ENCODE measurements at regions of chr2 and their contacts with region 1.

Region 1: DNA sequence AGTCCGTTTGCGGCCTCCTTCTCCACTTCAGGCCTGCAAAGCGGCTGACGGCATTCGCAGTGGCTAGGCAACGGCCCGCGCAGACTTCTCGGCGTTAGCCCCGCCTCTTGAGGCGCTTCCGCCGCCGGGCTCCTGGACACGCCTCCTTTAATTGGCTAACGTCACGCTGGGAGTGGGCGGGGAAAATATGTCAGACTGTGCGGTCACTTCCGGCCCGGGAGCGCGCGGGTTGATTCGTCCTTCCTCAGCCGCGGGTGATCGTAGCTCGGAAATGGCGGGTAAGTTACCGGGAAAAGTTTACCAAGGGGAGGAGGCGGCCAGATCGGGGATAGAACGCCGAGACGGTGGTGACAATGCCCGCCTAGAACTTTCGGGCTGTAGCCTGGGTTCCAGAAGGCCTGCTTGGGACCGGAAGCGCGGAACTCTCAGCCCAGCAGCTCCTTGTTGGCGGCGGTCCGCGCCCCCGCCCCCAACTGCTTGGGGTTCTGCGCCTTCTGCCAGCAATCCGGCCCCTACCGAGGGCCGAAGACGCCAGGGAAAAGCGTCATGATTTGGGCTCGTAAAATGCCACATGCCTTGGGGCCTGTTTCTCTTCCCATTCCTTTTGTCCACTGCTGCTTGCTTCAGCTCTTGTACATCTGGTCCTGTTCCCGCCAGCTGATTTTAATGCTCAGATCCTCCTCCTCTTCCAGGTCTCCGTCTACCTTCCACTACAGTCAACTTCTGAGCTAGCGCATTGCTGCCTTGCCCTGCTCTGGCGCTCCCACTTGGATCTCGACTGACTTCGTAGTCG is at the start of gene HAT1:
- DNase-seq: peak; percentile 84 to 98
- H3K4me3 ChIP-seq: peak within 1 kb of the TSS; percentile 87 to 97
- H3K27ac ChIP-seq: peak within 1 kb of the TSS; percentile 90 to 94
- H3K4me1 ChIP-seq: peaks cover 8 to 16% of the 10 kb centered on the region in 2 donors
- H3K27me3 ChIP-seq: no peaks in the 10 kb centered on the region
- CTCF ChIP-seq: no peak
- total RNA-seq, gene HAT1: 28.3 TPM

Region 2: DNA sequence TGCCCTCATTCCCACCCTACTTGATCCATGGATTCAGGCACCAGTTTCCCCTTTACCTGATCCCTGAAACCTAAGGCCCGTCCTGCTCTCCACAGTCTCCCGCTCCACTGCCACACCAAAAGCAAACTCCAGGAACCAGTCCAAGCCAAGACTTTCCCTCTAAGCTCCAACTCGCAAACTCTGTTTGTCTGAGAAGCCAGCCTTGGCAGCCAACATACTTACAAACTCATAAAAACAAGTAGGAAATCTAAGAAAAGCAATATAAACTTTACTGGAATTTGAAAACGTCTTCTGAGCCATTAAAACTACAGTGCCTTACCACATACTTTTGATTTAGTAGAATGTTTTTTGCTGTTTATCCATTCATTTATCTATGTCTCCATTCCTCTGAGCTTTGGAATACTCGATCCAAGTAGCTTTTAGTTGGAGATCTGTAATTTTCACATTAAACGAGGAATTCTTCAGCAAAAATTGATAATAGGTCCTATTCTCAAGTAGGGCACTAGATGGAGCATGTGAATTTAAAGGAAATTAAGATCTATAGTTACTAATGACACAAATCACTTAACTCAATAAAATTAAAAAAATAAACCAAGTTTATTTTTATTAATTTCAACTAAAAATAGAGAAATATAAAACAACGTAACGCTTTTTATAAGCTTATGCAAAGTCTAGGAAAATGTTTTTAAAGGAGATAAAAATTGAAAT is 1544.8 kb before region 1 on chr2:
- intact Hi-C with region 1: no loop called
- DNase-seq: no peak
- H3K4me3 ChIP-seq: peak overlapping the region in 1 of 2 donors; percentile 3
- H3K27ac ChIP-seq: peak overlapping the region in 1 of 2 donors; percentile 30
- H3K4me1 ChIP-seq: peaks cover 0 to 5% of the 10 kb centered on the region in 2 donors
- H3K27me3 ChIP-seq: no peaks in the 10 kb centered on the region
- CTCF ChIP-seq: peak in 1 of 3 experiments; percentile 5

Region 3: GRCh38 chr2:171160119-171160955 is 762.1 kb before region 1 on chr2 and contains the start of gene TLK1:
- intact Hi-C with region 1: loop called (anchors 2 kb)
- DNase-seq: peak; percentile 17 to 85
- H3K4me3 ChIP-seq: peak within 1 kb of the TSS; percentile 96 to 97
- H3K27ac ChIP-seq: peak within 1 kb of the TSS; percentile 98 to 99
- H3K4me1 ChIP-seq: peaks cover 0 to 7% of the 10 kb centered on the region in 2 donors
- H3K27me3 ChIP-seq: no peaks in the 10 kb centered on the region
- CTCF ChIP-seq: no peak
- total RNA-seq, gene TLK1: 32.2 TPM

Region 4: GRCh38 chr2:171529914-171530313 is 392.5 kb before region 1 on chr2:
- intact Hi-C with region 1: loop called (anchors 5 kb)
- DNase-seq: no peak
- H3K4me3 ChIP-seq: no peak overlapping the region
- H3K27ac ChIP-seq: peak overlapping the region; percentile 75 to 77
- H3K4me1 ChIP-seq: peaks cover 4 to 35% of the 10 kb centered on the region in 2 donors
- H3K27me3 ChIP-seq: no peaks in the 10 kb centered on the region
- CTCF ChIP-seq: peak in 2 of 3 experiments; percentile 33 to 44

Region 5: GRCh38 chr2:171687287-171688128 is 234.9 kb before region 1 on chr2 and contains the start of gene DYNC1I2:
- intact Hi-C with region 1: loop called (anchors 2 kb)
- DNase-seq: peak; percentile 70 to 96
- H3K4me3 ChIP-seq: peak within 1 kb of the TSS; percentile 76 to 85
- H3K27ac ChIP-seq: peak within 1 kb of the TSS; percentile 84 to 92
- H3K4me1 ChIP-seq: peaks cover 0 to 9% of the 10 kb centered on the region in 2 donors
- H3K27me3 ChIP-seq: no peaks in the 10 kb centered on the region
- CTCF ChIP-seq: no peak
- total RNA-seq, gene DYNC1I2: 81.0 TPM

Region 6: DNA sequence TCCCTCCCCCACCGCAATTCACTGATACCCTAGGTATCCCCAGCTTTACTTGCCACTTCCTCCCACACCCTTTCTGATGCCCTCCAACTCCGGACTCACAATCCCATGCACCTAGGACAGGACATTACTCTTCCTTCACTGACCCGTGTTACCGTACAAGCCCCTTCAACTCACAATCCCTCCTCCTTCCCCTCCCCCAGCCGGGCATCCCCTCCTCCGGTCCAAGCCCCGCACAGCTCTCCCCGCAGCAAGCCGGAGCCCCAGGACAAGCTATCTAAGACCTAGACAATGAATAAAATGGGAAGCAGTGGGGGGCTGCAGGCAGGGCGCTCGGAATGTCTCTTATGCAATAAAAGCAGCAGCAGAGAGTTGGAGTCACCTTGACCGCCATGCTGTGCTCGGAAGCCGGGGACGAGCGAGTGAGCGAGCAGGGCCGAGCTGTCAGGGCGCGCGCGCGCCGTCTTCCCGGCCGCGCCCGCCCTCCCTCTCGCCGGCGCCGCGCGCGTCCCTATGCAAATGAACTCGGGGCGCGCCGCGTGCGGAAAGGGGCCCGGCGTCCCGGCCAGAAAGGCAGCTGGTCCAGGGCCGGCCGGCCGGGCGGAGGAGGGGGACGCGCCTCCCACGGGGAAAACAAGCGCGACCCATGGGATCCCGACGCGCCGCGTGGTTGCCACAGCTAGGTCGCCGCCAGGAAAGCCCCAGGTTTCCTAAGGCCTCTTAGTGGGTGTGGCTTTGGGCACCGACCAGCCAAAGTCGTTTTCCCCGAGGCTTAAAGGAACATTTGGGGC is 28.4 kb before region 1 on chr2 and contains the start of gene SLC25A12:
- intact Hi-C with region 1: loop called (anchors 1 kb)
- DNase-seq: peak; percentile 12 to 85
- H3K4me3 ChIP-seq: peak within 1 kb of the TSS; percentile 95 to 98
- H3K27ac ChIP-seq: peak within 1 kb of the TSS; percentile 66 to 87
- H3K4me1 ChIP-seq: peaks cover 0 to 15% of the 10 kb centered on the region in 2 donors
- H3K27me3 ChIP-seq: no peaks in the 10 kb centered on the region
- CTCF ChIP-seq: no peak
- total RNA-seq, gene SLC25A12: 11.9 TPM

Region 7: DNA sequence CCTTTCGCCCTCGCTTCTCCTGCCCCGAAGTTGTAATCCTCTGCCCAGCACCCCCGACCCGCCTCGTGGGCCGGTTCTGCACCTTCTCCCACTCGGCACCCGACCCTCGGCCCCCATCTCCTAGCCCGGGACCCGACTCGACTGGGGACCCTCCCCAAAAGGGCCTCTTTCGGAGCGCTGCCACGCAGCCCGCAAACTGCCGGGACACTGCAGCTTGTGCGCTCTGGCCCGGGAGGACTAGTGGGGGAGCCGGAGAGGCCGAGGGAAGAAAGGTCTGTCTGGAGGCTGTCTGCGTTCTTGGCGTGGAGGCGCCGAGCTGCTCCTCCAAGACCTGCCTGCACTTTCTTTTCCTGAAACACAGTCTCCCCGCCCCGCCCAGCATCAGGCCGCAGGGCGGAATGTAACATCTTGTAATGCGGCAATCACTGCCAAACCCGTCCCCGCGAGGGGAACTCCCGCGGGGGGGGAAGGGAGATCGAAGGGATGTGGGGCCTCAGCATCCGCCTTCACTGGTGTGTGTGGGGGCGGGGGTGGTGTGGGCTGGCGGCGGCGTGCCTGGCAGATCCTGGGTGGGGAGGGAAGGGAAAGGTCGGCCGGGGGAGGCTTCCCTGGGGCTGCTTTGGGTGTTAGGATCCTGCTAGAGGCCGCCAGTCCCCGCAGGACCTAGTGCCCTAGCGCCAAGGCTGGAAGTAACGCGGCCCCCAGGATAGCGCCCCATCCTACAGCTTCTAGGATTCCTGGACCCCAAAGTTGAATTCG is 172.9 kb after region 1 on chr2:
- intact Hi-C with region 1: loop called (anchors 5 kb)
- DNase-seq: no peak
- H3K4me3 ChIP-seq: peak overlapping the region; percentile 48 to 67
- H3K27ac ChIP-seq: no peak overlapping the region
- H3K4me1 ChIP-seq: peaks cover 30 to 48% of the 10 kb centered on the region in 2 donors
- H3K27me3 ChIP-seq: peaks cover 66% of the 10 kb centered on the region
- CTCF ChIP-seq: no peak